ENCODE measurements at regions of chr12 and their contacts with region 1.

Region 1: GRCh38 chr12:120265473-120266179 is at the start of gene PXN:
- DNase-seq: peak; percentile 85 to 95
- H3K4me3 ChIP-seq: peak within 1 kb of the TSS; percentile 96
- H3K4me3 Mint-ChIP-seq: peak within 1 kb of the TSS; percentile 91
- H3K27ac Mint-ChIP-seq: peak within 1 kb of the TSS; percentile 86
- H3K4me1 ChIP-seq: peaks cover 42% of the 10 kb centered on the region
- H3K4me1 Mint-ChIP-seq: peaks cover 14% of the 10 kb centered on the region
- H3K27me3 ChIP-seq: no peaks in the 10 kb centered on the region
- H3K27me3 Mint-ChIP-seq: no peaks in the 10 kb centered on the region
- CTCF ChIP-seq: peak; percentile 66 to 84
- total RNA-seq, gene PXN: 150 and 162 TPM in 2 replicates

Region 2: GRCh38 chr12:120175062-120175461 is 90.6 kb before region 1 on chr12:
- CTCF ChIA-PET with region 1: no interaction called
- POLR2A ChIA-PET with region 1: no interaction called
- intact Hi-C with region 1: no loop called
- DNase-seq: no peak
- H3K4me3 ChIP-seq: no peak overlapping the region
- H3K4me3 Mint-ChIP-seq: no peak overlapping the region
- H3K27ac Mint-ChIP-seq: no peak overlapping the region
- H3K4me1 ChIP-seq: peaks cover 16% of the 10 kb centered on the region
- H3K4me1 Mint-ChIP-seq: peaks cover 14% of the 10 kb centered on the region
- H3K27me3 ChIP-seq: no peaks in the 10 kb centered on the region
- H3K27me3 Mint-ChIP-seq: no peaks in the 10 kb centered on the region
- CTCF ChIP-seq: no peak

Region 3: DNA sequence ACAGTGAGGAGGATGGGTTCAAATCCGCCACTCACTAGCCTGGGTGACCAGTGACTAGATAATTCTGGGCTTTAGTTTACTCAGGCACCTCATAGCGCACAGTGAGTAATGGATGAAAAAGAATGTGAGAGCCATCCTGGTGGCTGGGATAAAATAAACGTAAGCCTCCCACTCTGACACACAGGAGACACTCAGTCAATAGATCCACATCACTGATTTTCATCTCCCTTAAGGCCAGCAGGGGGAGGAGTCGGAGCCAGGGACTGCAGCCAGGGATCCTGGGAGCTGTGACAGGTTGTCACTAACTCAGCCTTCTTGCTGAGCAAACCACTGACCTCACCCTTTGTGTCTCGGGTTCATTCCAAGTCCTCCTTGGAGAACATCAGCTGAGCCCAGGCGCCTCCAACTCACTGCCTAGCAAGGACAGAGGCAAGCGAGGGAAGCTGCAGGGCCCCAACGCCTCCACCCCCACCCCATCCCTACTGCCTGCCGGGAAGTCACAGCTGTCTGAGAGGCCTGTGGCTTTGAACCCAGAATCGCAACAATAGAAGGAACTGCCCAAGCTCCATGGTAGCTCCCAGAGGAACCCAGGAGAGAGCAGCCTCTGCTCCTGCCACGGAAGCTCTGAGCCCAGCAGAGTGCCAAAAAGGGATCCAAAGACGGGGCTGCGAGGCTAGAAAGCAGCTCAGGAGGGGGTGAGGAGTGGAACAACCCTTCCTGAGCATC is 30.8 kb before region 1 on chr12:
- CTCF ChIA-PET with region 1: interaction called, 229 read pairs
- POLR2A ChIA-PET with region 1: interaction called, 117 read pairs
- intact Hi-C with region 1: no loop called
- DNase-seq: peak; percentile 82 to 83
- H3K4me3 ChIP-seq: no peak overlapping the region
- H3K4me3 Mint-ChIP-seq: no peak overlapping the region
- H3K27ac Mint-ChIP-seq: peak overlapping the region; percentile 71
- H3K4me1 ChIP-seq: peaks cover 82% of the 10 kb centered on the region
- H3K4me1 Mint-ChIP-seq: peaks cover 63% of the 10 kb centered on the region
- H3K27me3 ChIP-seq: no peaks in the 10 kb centered on the region
- H3K27me3 Mint-ChIP-seq: no peaks in the 10 kb centered on the region
- CTCF ChIP-seq: peak; percentile 51 to 69

Region 4: GRCh38 chr12:120514002-120514401 is 248.4 kb after region 1 on chr12:
- CTCF ChIA-PET with region 1: no interaction called
- POLR2A ChIA-PET with region 1: no interaction called
- intact Hi-C with region 1: no loop called
- DNase-seq: no peak
- H3K4me3 ChIP-seq: no peak overlapping the region
- H3K4me3 Mint-ChIP-seq: no peak overlapping the region
- H3K27ac Mint-ChIP-seq: no peak overlapping the region
- H3K4me1 ChIP-seq: no peaks in the 10 kb centered on the region; the same call in 1 of the 2 replicates
- H3K4me1 Mint-ChIP-seq: peaks cover 7% of the 10 kb centered on the region
- H3K27me3 ChIP-seq: no peaks in the 10 kb centered on the region
- H3K27me3 Mint-ChIP-seq: no peaks in the 10 kb centered on the region
- CTCF ChIP-seq: no peak

Measured in Caco-2 (cell line).